AG04450 (cell line): ENCODE measurements at regions of chr1 and their contacts with region 1.

Region 1: DNA sequence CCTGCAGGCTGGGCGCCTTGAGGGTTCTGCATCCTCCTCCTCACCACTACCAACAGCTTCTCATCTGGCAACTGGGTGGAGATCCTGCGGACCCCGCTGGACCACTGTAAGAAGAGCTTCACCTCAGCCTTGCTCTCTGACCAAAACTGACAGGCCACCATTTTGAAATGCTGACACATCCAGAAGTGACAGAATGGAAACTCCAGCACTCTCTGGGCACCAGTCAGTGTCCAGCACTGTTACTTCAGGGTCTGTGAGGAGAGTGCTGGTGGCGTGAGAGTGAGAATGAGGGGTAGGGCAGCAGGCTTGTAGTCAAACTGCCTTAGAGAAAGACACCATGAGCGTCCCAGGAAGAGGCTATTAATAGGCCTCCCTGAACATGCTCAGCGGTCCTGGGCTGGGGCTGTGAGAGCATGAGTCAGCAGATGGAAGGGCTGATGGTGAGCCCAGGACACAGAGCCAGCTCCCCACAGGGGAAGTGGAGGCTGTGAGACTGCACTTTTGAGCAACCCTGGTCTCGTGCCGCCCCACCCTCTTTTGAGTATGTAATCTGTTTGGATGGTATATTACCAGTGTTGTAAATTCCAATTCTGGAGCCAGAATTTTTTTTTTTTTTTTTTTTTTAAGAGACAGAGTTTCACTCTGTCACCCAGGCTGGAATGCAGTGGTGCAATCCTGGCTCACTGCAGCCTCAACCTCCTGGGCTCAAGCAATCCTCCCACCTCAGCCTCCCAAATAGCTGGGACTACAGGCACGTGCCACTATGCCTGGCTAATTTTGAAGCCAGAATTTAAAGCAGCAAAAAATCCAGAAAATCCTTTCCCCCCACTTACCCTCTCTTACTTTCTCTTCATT is 34.4 kb upstream of the SLC30A1 start:
- DNase-seq: peak; percentile 75
- H3K4me3 ChIP-seq: no peak overlapping the region
- H3K27ac ChIP-seq: peak overlapping the region; percentile 89
- H3K27me3 ChIP-seq: no peaks in the 10 kb centered on the region
- CTCF ChIP-seq: no peak

Region 2: GRCh38 chr1:211578640-211579433 is 34.5 kb before region 1 on chr1 and contains the start of gene SLC30A1:
- CTCF ChIA-PET with region 1: interaction called, 4 read pairs
- POLR2A ChIA-PET with region 1: interaction called, 11 read pairs
- DNase-seq: peak; percentile 97
- H3K4me3 ChIP-seq: peak within 1 kb of the TSS; percentile 87
- H3K27ac ChIP-seq: peak within 1 kb of the TSS; percentile 55
- H3K27me3 ChIP-seq: no peaks in the 10 kb centered on the region
- CTCF ChIP-seq: no peak
- polyA plus RNA-seq, gene SLC30A1: 11.1 and 12.8 TPM in 2 replicates

Region 3: DNA sequence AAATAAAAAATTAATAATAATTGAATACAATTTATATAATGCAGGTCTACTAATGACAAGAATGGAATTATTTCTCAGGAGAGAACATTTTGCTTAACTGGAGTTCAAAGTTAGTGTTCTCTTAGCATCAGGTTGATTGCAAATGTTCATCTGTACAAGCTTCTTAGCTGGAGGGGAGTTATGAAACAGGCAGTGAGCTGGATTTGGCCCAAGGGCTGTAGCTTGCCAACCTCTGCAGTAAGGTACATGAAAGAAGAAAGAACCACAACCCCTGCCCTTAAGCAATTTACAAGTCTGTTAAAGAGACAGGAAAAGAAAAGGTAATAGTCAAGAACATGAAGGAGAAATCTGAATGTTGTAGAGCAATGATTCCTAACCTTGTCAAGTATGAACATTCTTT is 200.3 kb after region 1 on chr1:
- CTCF ChIA-PET with region 1: no interaction called
- POLR2A ChIA-PET with region 1: no interaction called
- DNase-seq: no peak
- H3K4me3 ChIP-seq: no peak overlapping the region
- H3K27ac ChIP-seq: no peak overlapping the region
- H3K27me3 ChIP-seq: no peaks in the 10 kb centered on the region
- CTCF ChIP-seq: no peak